ENCODE measurements at regions of chr11 and their contacts with region 1.

Region 1: GRCh38 chr11:2097356-2097997 is 41.7 kb downstream of the IGF2 start:
- DNase-seq: peak; percentile 79 to 93 (median 87)
- ATAC-seq: peak; percentile 79 to 80
- H3K4me3 ChIP-seq: no peak overlapping the region
- H3K27ac ChIP-seq: peak overlapping the region; percentile 47
- H3K4me1 ChIP-seq: peaks cover 20% of the 10 kb centered on the region
- H3K27me3 ChIP-seq: no peaks in the 10 kb centered on the region

Region 2: DNA sequence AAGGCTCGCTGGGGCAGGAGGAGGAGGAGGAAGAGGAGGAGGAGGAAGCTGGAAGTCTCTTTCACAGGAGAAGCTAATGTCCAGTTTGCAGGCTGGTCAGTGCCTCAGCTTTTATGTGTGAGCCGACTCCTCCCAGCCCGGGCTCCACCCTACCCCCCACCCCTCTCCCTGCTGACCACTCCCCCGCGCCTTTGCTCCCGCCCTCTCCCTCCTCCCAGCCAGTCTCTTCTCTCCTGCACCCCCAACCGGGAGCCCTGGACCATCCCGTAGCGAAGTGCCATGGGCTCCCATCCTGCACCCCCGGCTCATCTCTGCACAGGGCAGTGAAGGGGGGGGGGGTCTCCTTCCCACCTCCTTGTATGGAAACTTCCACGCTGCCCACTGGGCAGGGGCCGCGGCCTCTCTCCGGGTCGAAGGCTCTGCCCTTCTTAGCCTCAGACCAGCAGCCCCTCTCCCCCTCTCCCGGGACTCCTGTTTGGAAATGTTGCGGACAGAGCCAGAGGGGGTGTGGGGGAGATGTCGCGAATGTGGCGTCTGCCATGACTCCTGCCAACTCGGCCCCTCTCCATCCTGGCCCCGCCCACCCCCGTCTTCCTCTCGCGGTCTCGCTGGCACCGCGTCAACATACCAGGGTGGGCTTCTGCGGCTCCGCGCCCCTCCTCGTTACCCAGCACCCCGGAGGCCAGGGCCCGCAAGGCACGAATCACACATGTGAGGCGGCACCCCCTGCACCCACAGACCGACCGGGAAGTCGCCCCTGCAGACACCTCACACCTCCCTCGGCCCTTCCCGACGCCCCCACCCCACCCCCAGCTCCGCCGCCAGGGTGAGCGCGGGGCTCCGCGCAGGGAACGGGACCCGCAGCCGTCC is 40.0 kb after region 1 on chr11:
- intact Hi-C with region 1: loop called in 1 of 4 experiments (anchors 5 kb)
- DNase-seq: peak; percentile 65 to 85 (median 84)
- ATAC-seq: peak; percentile 74 to 81
- H3K4me3 ChIP-seq: peak overlapping the region; percentile 48
- H3K27ac ChIP-seq: no peak overlapping the region
- H3K4me1 ChIP-seq: no peaks in the 10 kb centered on the region
- H3K27me3 ChIP-seq: no peaks in the 10 kb centered on the region